ENCODE measurements at regions of chr19 and their contacts with region 1.

Region 1: GRCh38 chr19:58326914-58327726 is at the start of gene ZSCAN22:
- DNase-seq: peak; percentile 95
- H3K4me3 Mint-ChIP-seq: no peak within 1 kb of the TSS
- H3K27ac Mint-ChIP-seq: no peak within 1 kb of the TSS
- H3K4me1 Mint-ChIP-seq: no peaks in the 10 kb centered on the region
- H3K27me3 Mint-ChIP-seq: no peaks in the 10 kb centered on the region
- total RNA-seq, gene ZSCAN22: 1.2 to 1.3 TPM

Region 2: DNA sequence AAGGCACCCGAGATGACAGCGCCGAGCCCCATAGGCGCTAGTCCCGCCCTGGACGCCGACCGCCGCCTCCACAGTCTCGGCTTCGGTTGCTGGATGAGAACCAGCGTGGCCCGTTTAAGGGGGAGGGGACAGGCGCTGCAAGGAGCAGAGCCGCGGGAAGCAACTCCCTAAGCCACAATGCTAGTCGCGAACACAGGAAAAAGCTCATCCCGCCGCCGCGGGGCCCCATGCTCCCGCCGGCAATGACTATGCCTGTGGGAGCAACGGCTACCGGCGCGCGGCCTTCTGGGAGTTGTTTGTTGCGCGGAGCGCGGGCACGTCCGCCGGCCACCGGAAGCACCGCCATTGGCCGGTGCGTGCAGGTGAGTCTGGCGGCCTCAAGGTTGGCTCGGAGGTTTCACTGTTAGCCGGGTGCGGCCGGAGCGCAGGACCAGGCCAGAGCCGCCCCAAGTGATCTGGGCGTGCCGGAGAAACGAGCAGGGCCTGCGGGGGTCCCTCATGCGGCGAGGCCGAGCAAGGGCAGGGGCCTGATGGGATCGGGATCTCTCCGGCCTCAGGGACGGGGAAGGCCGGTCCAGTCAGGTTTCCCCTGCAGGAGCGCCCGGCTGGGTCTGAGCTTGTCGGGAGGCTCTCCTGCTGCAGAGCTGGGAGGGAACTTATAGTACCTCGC is 98.4 kb before region 1 on chr19 and contains the start of gene ZNF544:
- CTCF ChIA-PET with region 1: no interaction called
- intact Hi-C with region 1: loop called (anchors 1 kb)
- DNase-seq: peak; percentile 76
- H3K4me3 Mint-ChIP-seq: peak within 1 kb of the TSS; percentile 94
- H3K27ac Mint-ChIP-seq: peak within 1 kb of the TSS; percentile 92
- H3K4me1 Mint-ChIP-seq: peaks cover 29% of the 10 kb centered on the region
- H3K27me3 Mint-ChIP-seq: no peaks in the 10 kb centered on the region
- total RNA-seq, gene ZNF544: 32.4 to 35.4 TPM

Region 3: GRCh38 chr19:58362272-58362994 is 35.3 kb after region 1 on chr19 and contains the start of gene ZNF497:
- CTCF ChIA-PET with region 1: no interaction called
- intact Hi-C with region 1: loop called (anchors 1 kb)
- DNase-seq: peak; percentile 97
- H3K4me3 Mint-ChIP-seq: peak within 1 kb of the TSS; percentile 93
- H3K27ac Mint-ChIP-seq: peak within 1 kb of the TSS; percentile 87
- H3K4me1 Mint-ChIP-seq: peaks cover 8% of the 10 kb centered on the region
- H3K27me3 Mint-ChIP-seq: no peaks in the 10 kb centered on the region
- total RNA-seq, gene ZNF497: 0.40 to 0.41 TPM

Region 4: DNA sequence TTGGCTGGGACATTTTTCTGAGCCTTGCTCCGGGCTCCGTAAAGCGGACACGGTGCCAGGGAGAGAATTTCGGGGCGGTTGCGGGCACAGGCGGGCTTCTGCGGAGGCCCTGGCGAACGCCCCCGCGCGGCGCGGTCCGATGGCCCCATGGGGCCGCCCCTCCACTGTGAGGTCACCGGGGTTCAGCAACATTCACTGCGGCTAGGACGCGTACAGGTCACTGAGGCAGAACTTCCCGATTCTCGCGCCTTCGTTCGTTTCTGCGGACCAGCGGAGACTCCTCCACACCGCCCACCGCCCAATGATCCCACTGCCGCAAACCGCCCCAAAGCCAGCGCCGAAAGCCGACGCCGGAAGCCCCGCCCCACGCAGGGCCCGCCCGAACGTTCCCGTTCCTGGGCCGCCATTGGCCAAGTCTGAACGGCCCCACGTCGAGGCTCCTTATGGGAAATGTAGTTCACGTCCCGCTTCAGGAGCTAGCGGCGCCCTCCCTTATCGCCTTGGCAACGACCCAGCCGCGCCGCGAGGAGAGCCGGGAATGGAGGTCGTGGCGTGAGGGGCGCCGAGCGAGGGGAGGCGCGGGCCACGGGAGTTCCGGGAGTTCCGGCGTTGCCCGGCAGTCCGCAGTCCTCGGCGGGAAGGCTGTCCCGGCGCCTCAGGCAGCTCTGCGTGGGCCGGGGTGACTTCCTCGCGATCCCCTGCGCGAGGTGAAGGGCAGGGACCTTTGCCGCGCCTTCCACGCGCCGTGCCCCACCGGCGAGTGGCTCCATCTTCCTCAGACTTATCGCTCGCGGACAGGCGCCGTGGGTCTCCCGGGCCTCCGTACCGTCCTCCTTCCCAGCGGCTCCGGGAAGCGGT is 81.3 kb after region 1 on chr19 and contains the start of gene ZNF584:
- CTCF ChIA-PET with region 1: no interaction called
- intact Hi-C with region 1: loop called (anchors 2 kb)
- DNase-seq: peak; percentile 97
- H3K4me3 Mint-ChIP-seq: peak within 1 kb of the TSS; percentile 89
- H3K27ac Mint-ChIP-seq: peak within 1 kb of the TSS; percentile 93
- H3K4me1 Mint-ChIP-seq: peaks cover 30% of the 10 kb centered on the region
- H3K27me3 Mint-ChIP-seq: no peaks in the 10 kb centered on the region
- total RNA-seq, gene ZNF584: 3.4 to 4.8 TPM

Region 5: DNA sequence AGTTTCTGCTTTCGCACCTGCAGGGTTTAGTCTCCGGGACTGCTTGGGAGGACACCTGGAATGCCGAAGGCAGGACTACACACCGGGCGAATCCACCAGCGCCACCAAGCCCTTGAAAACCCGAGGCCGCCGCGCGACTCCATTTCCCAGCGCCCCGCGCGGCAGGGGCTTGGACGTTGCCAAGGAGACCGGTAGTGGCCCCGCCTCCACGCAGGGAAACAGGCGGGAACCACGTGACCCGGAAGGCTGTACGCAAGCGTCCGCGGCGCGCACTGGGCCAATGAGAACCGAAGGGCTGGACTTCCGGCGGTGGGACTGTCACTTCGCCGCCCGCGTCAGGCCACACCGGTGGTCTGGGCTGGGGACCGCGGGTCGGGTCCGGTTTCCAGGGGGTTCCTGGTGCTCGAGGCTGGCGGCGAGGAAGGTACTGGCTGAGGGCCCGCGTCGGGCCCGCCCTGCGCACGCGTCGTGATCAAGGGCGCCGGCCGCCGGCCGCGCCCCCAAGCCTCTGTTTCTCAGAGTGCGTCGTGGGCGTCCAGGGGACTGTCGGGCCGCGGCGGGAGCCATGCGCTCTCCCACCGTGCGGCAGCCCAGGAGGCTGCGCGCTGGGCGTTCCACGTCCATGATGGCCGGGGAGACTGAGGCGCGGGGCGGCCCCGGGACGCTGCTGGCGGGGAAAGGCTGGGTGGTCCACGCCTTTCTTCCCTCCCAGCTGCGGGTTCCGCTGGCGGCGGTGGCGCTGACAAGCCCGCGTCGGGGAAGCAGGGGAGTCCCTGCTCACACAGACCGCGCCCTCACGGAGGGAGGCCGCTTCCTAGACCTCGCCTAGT is 139.9 kb after region 1 on chr19 and contains the start of gene ZNF324:
- CTCF ChIA-PET with region 1: no interaction called
- intact Hi-C with region 1: loop called (anchors 2 kb)
- DNase-seq: peak; percentile 99
- H3K4me3 Mint-ChIP-seq: peak within 1 kb of the TSS; percentile 83
- H3K27ac Mint-ChIP-seq: no peak within 1 kb of the TSS
- H3K4me1 Mint-ChIP-seq: peaks cover 20% of the 10 kb centered on the region
- H3K27me3 Mint-ChIP-seq: peaks cover 2% of the 10 kb centered on the region
- total RNA-seq, gene ZNF324: 2.4 to 3.0 TPM

Region 6: DNA sequence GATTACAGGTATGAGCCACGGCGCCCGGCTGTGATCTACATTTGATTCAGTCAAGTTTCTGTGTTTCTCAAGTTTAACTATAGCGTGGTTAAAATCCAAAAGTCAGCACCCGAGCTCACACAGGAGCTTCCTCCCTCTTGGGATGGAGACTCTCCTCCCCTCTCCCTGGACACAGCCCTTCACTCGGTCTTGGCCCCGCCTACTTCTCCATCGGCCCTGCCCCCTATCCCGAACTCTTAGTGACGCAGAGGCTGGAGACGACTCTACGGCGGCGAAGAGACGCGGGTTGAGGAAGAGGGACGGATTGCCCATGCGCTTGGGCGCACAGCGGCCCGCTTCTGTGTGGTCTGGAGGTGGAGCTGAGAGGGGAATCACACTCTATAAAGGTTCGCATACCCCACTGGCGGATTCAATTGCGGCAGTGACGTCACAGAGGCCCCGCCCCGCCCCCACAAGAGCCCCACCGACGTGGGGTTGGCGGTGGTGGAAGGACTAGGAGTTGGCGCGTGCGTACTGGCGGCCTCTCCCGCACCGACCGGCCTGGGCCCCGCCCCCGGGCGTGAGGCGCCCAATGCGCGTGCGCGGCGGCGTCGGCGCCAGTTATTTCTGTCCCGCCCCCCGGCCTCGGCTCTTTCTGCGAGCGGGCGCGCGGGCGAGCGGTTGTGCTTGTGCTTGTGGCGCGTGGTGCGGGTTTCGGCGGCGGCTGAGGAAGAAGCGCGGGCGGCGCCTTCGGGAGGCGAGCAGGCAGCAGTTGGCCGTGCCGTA is 216.9 kb after region 1 on chr19 and contains the start of gene TRIM28:
- CTCF ChIA-PET with region 1: no interaction called
- intact Hi-C with region 1: loop called (anchors 1 kb)
- DNase-seq: peak; percentile 100
- H3K4me3 Mint-ChIP-seq: peak within 1 kb of the TSS; percentile 97
- H3K27ac Mint-ChIP-seq: peak within 1 kb of the TSS; percentile 97
- H3K4me1 Mint-ChIP-seq: peaks cover 30% of the 10 kb centered on the region
- H3K27me3 Mint-ChIP-seq: peaks cover 15% of the 10 kb centered on the region
- total RNA-seq, gene TRIM28: 475 to 483 TPM

Measured in activated naive CD4-positive, alpha-beta T cell treated with anti-CD3 and anti-CD28 coated beads for 36 hours (primary cell).